Caco-2 (cell line): ENCODE measurements at regions of chr1 and their contacts with region 1.

Region 1: DNA sequence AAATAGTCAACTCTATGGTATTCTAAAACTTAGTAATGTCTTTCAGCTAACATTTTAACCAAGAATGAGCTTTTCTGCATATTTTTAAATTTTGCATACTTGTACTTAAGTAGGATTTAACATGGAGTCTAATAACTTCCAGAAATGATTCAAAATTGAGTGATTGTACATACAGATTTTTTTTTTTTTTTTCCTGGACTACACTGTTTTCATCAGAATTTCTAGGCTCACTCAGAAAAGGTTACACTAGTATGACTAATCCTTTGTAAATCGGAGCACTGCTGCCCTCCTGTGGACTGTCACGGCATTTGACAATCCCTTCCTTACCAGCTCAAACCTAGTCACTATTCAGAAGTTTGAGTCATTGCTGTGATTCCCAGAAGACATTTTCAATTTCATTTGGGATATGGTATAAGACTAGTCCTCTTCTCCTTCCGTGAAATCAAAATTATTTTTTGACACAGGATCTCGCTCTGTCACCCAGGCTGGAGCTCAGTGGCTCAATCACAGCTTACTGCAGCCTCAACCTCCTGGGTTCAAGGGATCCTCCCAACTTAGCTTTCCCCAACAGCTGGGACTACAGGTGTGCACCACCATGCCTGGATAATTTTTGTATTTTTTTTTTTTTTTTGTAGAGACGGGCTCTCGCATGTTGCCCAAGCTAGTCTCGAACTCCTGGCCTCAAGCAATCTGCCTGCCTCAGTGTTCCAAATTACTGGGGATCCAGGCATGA is 45.5 kb downstream of the CD46 start:
- DNase-seq: peak; percentile 81 to 83
- H3K4me3 ChIP-seq: no peak overlapping the region
- H3K4me3 Mint-ChIP-seq: no peak overlapping the region
- H3K27ac Mint-ChIP-seq: no peak overlapping the region
- H3K4me1 ChIP-seq: peaks cover 9% of the 10 kb centered on the region; the same call in 1 of the 2 replicates
- H3K4me1 Mint-ChIP-seq: peaks cover 17% of the 10 kb centered on the region
- H3K27me3 ChIP-seq: no peaks in the 10 kb centered on the region
- H3K27me3 Mint-ChIP-seq: no peaks in the 10 kb centered on the region
- CTCF ChIP-seq: peak; percentile 65 to 80

Region 2: GRCh38 chr1:207619871-207620542 is 177.4 kb before region 1 on chr1:
- CTCF ChIA-PET with region 1: interaction called, 10 read pairs
- POLR2A ChIA-PET with region 1: no interaction called
- intact Hi-C with region 1: no loop called
- DNase-seq: peak in 1 of 2 experiments; percentile 36
- H3K4me3 ChIP-seq: no peak overlapping the region
- H3K4me3 Mint-ChIP-seq: no peak overlapping the region
- H3K27ac Mint-ChIP-seq: no peak overlapping the region
- H3K4me1 ChIP-seq: no peaks in the 10 kb centered on the region
- H3K4me1 Mint-ChIP-seq: no peaks in the 10 kb centered on the region
- H3K27me3 ChIP-seq: no peaks in the 10 kb centered on the region
- H3K27me3 Mint-ChIP-seq: peaks cover 8% of the 10 kb centered on the region
- CTCF ChIP-seq: peak; percentile 69 to 83

Region 3: GRCh38 chr1:207711285-207711684 is 86.1 kb before region 1 on chr1:
- CTCF ChIA-PET with region 1: interaction called, 15 read pairs
- POLR2A ChIA-PET with region 1: no interaction called
- intact Hi-C with region 1: loop called (anchors 1 kb)
- DNase-seq: peak; percentile 53 to 61
- H3K4me3 ChIP-seq: no peak overlapping the region
- H3K4me3 Mint-ChIP-seq: no peak overlapping the region
- H3K27ac Mint-ChIP-seq: no peak overlapping the region
- H3K4me1 ChIP-seq: no peaks in the 10 kb centered on the region
- H3K4me1 Mint-ChIP-seq: no peaks in the 10 kb centered on the region
- H3K27me3 ChIP-seq: no peaks in the 10 kb centered on the region
- H3K27me3 Mint-ChIP-seq: no peaks in the 10 kb centered on the region
- CTCF ChIP-seq: peak in 1 of 2 experiments; percentile 25

Region 4: GRCh38 chr1:207751790-207752455 is 45.5 kb before region 1 on chr1 and contains the start of gene CD46:
- CTCF ChIA-PET with region 1: interaction called, 19 read pairs
- POLR2A ChIA-PET with region 1: interaction called, 5 read pairs
- intact Hi-C with region 1: loop called (anchors 1 kb)
- DNase-seq: peak; percentile 98 to 99
- H3K4me3 ChIP-seq: peak within 1 kb of the TSS; percentile 90
- H3K4me3 Mint-ChIP-seq: peak within 1 kb of the TSS; percentile 93
- H3K27ac Mint-ChIP-seq: peak within 1 kb of the TSS; percentile 95
- H3K4me1 ChIP-seq: peaks cover 70% of the 10 kb centered on the region
- H3K4me1 Mint-ChIP-seq: peaks cover 48% of the 10 kb centered on the region
- H3K27me3 ChIP-seq: no peaks in the 10 kb centered on the region
- H3K27me3 Mint-ChIP-seq: no peaks in the 10 kb centered on the region
- CTCF ChIP-seq: no peak
- total RNA-seq, gene CD46: 152 and 166 TPM in 2 replicates